Activated naive CD4-positive, alpha-beta T cell treated with anti-CD3 and anti-CD28 coated beads for 36 hours (primary cell): ENCODE measurements at regions of chr9 and their contacts with region 1.

Region 1: GRCh38 chr9:4077499-4078102 is 222.3 kb downstream of the GLIS3 start:
- DNase-seq: peak; percentile 76
- H3K4me3 Mint-ChIP-seq: no peak overlapping the region
- H3K27ac Mint-ChIP-seq: no peak overlapping the region
- H3K4me1 Mint-ChIP-seq: no peaks in the 10 kb centered on the region
- H3K27me3 Mint-ChIP-seq: peaks cover 3% of the 10 kb centered on the region

Region 2: DNA sequence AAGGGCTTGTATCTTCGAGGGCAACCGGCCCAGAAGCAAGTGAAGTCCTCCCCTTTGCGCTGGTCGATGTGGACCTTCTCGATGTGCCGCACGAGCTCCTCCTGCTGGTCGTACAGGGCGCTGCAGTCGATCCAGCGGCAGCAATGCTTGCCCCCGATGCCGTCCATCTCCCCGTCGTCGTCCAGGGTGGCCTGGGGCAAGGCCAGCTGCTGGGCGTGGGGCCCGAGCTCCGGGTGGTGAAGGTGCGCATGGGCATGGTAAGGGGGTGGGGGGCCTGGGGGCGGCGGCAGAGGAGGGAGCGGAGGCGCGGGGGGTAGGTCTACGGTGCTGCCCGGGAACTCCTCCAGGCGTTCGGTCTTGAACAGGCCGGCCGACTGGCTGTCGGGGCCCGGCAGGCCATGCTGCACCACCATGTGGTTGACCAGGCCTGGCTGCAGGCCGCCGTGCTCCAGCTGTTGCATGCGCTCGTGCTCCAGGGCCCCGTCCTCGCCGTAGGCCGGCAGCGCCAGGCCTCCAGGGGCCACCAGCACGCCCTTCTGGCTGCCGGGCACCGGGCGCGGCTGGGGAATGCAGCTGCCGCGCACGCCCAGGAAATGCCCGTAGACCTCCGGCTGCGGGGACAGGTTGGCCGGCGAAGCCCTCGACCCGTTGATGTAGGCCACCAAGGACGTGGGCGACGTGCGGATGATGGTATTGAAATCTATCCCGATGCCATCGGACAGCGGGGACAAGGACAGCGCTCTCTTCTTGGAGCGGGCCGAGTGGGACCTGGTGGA is 40.4 kb after region 1 on chr9:
- CTCF ChIA-PET with region 1: interaction called, 12 read pairs
- intact Hi-C with region 1: no loop called
- DNase-seq: peak; percentile 62
- H3K4me3 Mint-ChIP-seq: no peak overlapping the region
- H3K27ac Mint-ChIP-seq: no peak overlapping the region
- H3K4me1 Mint-ChIP-seq: no peaks in the 10 kb centered on the region
- H3K27me3 Mint-ChIP-seq: no peaks in the 10 kb centered on the region

Region 3: GRCh38 chr9:4197548-4197947 is 119.9 kb after region 1 on chr9:
- CTCF ChIA-PET with region 1: no interaction called
- intact Hi-C with region 1: loop called (anchors 10 kb)
- DNase-seq: peak; percentile 19
- H3K4me3 Mint-ChIP-seq: no peak overlapping the region
- H3K27ac Mint-ChIP-seq: no peak overlapping the region
- H3K4me1 Mint-ChIP-seq: no peaks in the 10 kb centered on the region
- H3K27me3 Mint-ChIP-seq: peaks cover 4% of the 10 kb centered on the region